HepG2 (cell line): ENCODE measurements at regions of chr3 and their contacts with region 1.

Region 1: GRCh38 chr3:71210257-71211007 is 373.1 kb downstream of the FOXP1 start:
- DNase-seq: peak; percentile 87
- ATAC-seq: peak; percentile 47
- H3K4me3 ChIP-seq: peak overlapping the region in 1 of 3 experiments; percentile 17; a peak in 1 of 6 replicates
- H3K27ac ChIP-seq: peak overlapping the region; percentile 99
- H3K4me1 ChIP-seq: peaks cover 69% of the 10 kb centered on the region
- H3K27me3 ChIP-seq: no peaks in the 10 kb centered on the region
- CTCF ChIP-seq: no peak
- EP300 ChIP-seq: peak in 1 of 2 experiments; percentile 66; a peak in 2 of 4 replicates
- POLR2A ChIP-seq: no peak
- RAD21 ChIP-seq: peak; percentile 19; the same call in 1 of the 2 replicates

Region 2: DNA sequence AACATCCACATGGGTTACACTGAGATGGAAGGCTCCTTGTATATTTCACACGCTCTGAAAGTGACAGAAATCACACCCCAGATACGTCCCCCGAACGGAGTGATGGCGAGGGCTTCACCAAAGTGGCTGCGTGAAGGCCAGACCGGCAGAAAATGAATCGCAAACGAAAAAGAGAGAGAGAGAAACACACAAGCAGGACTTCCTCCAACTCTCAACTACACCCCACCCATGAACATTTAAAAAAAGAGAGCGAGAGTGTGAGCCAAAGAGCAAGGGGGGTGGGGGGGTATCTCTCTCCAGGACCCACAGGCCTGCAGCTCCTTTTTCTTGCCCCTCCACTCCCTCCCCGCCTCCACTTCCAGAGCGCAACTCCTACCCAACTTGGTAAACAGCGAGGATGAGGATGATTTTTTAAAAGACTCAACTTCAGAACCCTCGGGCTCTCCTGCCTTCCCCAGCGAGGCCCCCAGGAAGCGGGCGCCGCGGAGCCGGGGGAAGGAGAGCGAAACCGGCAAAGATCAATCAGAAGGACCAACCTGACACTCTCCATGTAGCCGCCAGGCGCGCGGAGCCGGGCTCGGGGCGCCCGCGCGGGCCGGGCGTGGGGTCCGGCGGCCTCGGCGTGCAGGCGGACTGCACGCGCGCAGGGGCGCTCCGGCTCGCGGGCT is 146.0 kb before region 1 on chr3:
- CTCF ChIA-PET with region 1: no interaction called
- POLR2A ChIA-PET with region 1: interaction called, 15 read pairs
- in situ Hi-C with region 1: no loop called
- intact Hi-C with region 1: loop called (anchors 2 kb)
- DNase-seq: peak; percentile 63
- ATAC-seq: peak; percentile 80
- H3K4me3 ChIP-seq: peak overlapping the region; percentile 70 to 83 (median 82)
- H3K27ac ChIP-seq: peak overlapping the region; percentile 71
- H3K4me1 ChIP-seq: peaks cover 75% of the 10 kb centered on the region
- H3K27me3 ChIP-seq: no peaks in the 10 kb centered on the region; a peak in 1 of 5 replicates
- CTCF ChIP-seq: no peak
- EP300 ChIP-seq: no peak; a peak in 1 of 4 replicates
- POLR2A ChIP-seq: peak in 1 of 2 experiments; percentile 4; a peak in 1 of 4 replicates
- RAD21 ChIP-seq: no peak

Region 3: DNA sequence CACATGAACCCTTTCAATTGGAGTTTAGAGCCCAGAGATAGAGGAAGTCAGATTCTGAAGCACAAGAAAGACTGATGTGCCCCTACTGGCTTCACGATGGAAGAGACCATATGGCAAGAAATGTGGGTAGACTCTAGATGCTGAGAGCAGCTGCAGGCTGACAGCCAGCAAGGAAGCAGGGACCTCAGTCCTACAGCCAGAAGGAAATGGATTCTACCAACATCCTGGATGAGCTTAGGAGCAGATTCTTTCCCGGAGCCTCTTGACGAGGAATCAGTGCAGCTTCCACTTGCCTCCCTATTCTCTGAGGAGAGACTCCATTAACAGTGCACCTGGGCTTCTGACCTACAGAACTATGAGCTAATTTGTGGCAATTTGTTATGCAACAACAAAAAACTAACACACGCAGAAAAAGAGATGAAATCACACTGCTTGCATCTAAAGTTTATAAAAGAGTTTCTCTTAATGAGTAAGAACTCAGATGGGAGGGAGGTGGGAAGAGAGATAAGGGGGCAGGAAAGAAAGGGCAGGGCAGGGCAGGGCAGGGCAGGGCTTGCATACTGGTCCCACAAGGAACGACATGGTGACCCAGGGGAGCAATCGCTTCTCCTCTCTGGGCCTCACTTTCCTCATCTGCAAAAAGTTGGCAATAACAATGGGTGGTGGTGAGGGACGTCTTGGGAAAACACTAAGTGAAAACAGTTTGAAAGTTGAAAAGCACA is 67.8 kb before region 1 on chr3:
- CTCF ChIA-PET with region 1: no interaction called
- POLR2A ChIA-PET with region 1: interaction called, 23 read pairs
- in situ Hi-C with region 1: no loop called
- intact Hi-C with region 1: no loop called
- DNase-seq: no peak
- ATAC-seq: peak; percentile 29; the same call in 2 of the 3 replicates
- H3K4me3 ChIP-seq: no peak overlapping the region
- H3K27ac ChIP-seq: peak overlapping the region; percentile 76
- H3K4me1 ChIP-seq: peaks cover 31% of the 10 kb centered on the region
- H3K27me3 ChIP-seq: no peaks in the 10 kb centered on the region
- CTCF ChIP-seq: no peak
- EP300 ChIP-seq: no peak
- POLR2A ChIP-seq: no peak
- RAD21 ChIP-seq: no peak

Region 4: GRCh38 chr3:71168880-71169411 is 41.5 kb before region 1 on chr3:
- CTCF ChIA-PET with region 1: no interaction called
- POLR2A ChIA-PET with region 1: interaction called, 12 read pairs
- in situ Hi-C with region 1: no loop called
- intact Hi-C with region 1: loop called (anchors 5 kb)
- DNase-seq: no peak
- ATAC-seq: no peak; the same call in 1 of the 3 replicates
- H3K4me3 ChIP-seq: no peak overlapping the region
- H3K27ac ChIP-seq: peak overlapping the region; percentile 34
- H3K4me1 ChIP-seq: peaks cover 59% of the 10 kb centered on the region
- H3K27me3 ChIP-seq: no peaks in the 10 kb centered on the region
- CTCF ChIP-seq: no peak
- EP300 ChIP-seq: no peak
- POLR2A ChIP-seq: no peak
- RAD21 ChIP-seq: no peak

Region 5: GRCh38 chr3:71258116-71258515 is 47.7 kb after region 1 on chr3:
- CTCF ChIA-PET with region 1: no interaction called
- POLR2A ChIA-PET with region 1: interaction called, 14 read pairs
- in situ Hi-C with region 1: no loop called
- intact Hi-C with region 1: loop called (anchors 1 kb)
- DNase-seq: peak; percentile 70
- ATAC-seq: peak; percentile 68
- H3K4me3 ChIP-seq: no peak overlapping the region
- H3K27ac ChIP-seq: peak overlapping the region; percentile 59
- H3K4me1 ChIP-seq: peaks cover 83% of the 10 kb centered on the region
- H3K27me3 ChIP-seq: no peaks in the 10 kb centered on the region
- CTCF ChIP-seq: no peak
- EP300 ChIP-seq: no peak
- POLR2A ChIP-seq: no peak
- RAD21 ChIP-seq: no peak